Aorta (tissue), 5 donors: ENCODE measurements at regions of chr18 and their contacts with region 1.

Region 1: GRCh38 chr18:57780706-57781347 is 22.3 kb downstream of the ATP8B1 start:
- DNase-seq: no peak
- ATAC-seq: peak; percentile 57
- H3K4me3 ChIP-seq: no peak overlapping the region
- H3K27ac ChIP-seq: peak overlapping the region; percentile 87 to 99
- H3K4me1 ChIP-seq: peaks cover 4 to 16% of the 10 kb centered on the region in 2 donors
- H3K27me3 ChIP-seq: no peaks in the 10 kb centered on the region

Region 2: GRCh38 chr18:57737400-57738060 is 43.3 kb before region 1 on chr18:
- intact Hi-C with region 1: loop called in 1 of 2 experiments (anchors 5 kb)
- DNase-seq: peak; percentile 89
- ATAC-seq: peak; percentile 87
- H3K4me3 ChIP-seq: no peak overlapping the region
- H3K27ac ChIP-seq: peak overlapping the region in 1 of 2 donors; percentile 43
- H3K4me1 ChIP-seq: peaks cover 3% of the 10 kb centered on the region in 2 donors
- H3K27me3 ChIP-seq: no peaks in the 10 kb centered on the region

Region 3: GRCh38 chr18:58998401-58999203 is 1217.8 kb after region 1 on chr18:
- intact Hi-C with region 1: loop called in 1 of 2 experiments (anchors 10 kb)
- DNase-seq: peak; percentile 80 to 85
- ATAC-seq: peak; percentile 70
- H3K4me3 ChIP-seq: peak overlapping the region in 1 of 2 donors; percentile 23
- H3K27ac ChIP-seq: peak overlapping the region; percentile 85 to 88
- H3K4me1 ChIP-seq: peaks cover 2 to 7% of the 10 kb centered on the region in 2 donors
- H3K27me3 ChIP-seq: no peaks in the 10 kb centered on the region